ENCODE measurements at regions of chr16 and their contacts with region 1.

Region 1: GRCh38 chr16:56317998-56318826 is 107.1 kb downstream of the AMFR start:
- DNase-seq: peak; percentile 71
- H3K4me3 ChIP-seq: peak overlapping the region in 1 of 3 experiments; percentile 10
- H3K27ac ChIP-seq: no peak overlapping the region
- H3K4me1 ChIP-seq: no peaks in the 10 kb centered on the region
- H3K27me3 ChIP-seq: peaks cover 4 to 6% of the 10 kb centered on the region in 2 experiments
- CTCF ChIP-seq: peak; percentile 89 to 94
- POLR2A ChIP-seq: no peak

Region 2: GRCh38 chr16:55711959-55712876 is 606.0 kb before region 1 on chr16:
- CTCF ChIA-PET with region 1: interaction called, 14 read pairs
- POLR2A ChIA-PET with region 1: no interaction called
- dilution Hi-C with region 1: no loop called
- intact Hi-C with region 1: loop called (anchors 1 kb)
- DNase-seq: peak; percentile 47
- H3K4me3 ChIP-seq: no peak overlapping the region
- H3K27ac ChIP-seq: no peak overlapping the region
- H3K4me1 ChIP-seq: no peaks in the 10 kb centered on the region
- H3K27me3 ChIP-seq: peaks cover 1 to 2% of the 10 kb centered on the region in 2 experiments
- CTCF ChIP-seq: peak; percentile 61 to 69
- POLR2A ChIP-seq: no peak

Region 3: DNA sequence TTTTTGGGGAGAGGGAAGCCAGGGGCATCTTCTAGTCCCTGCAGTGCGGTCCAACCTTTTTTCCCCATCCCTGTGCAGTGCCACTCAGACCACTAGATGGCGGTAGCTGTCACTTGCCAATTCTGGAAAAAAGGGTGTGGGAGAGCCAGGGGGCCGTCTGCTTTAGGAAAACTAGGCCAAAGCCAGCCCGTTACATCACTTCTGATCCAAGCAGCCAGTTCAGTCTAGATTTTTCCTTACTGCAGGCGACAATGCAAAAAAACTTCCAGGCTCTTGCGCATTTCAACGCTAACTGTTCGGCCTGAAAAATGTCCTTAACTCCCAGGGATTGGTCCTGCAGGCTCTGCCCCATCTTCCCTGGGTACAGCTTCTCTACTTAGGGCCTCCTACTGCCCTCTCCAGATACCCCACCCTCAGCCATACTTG is 373.8 kb before region 1 on chr16:
- CTCF ChIA-PET with region 1: interaction called, 166 read pairs
- POLR2A ChIA-PET with region 1: no interaction called
- dilution Hi-C with region 1: no loop called
- intact Hi-C with region 1: no loop called
- DNase-seq: peak; percentile 41
- H3K4me3 ChIP-seq: no peak overlapping the region
- H3K27ac ChIP-seq: no peak overlapping the region
- H3K4me1 ChIP-seq: no peaks in the 10 kb centered on the region
- H3K27me3 ChIP-seq: no peaks in the 10 kb centered on the region
- CTCF ChIP-seq: peak; percentile 90 to 92
- POLR2A ChIP-seq: no peak

Region 4: DNA sequence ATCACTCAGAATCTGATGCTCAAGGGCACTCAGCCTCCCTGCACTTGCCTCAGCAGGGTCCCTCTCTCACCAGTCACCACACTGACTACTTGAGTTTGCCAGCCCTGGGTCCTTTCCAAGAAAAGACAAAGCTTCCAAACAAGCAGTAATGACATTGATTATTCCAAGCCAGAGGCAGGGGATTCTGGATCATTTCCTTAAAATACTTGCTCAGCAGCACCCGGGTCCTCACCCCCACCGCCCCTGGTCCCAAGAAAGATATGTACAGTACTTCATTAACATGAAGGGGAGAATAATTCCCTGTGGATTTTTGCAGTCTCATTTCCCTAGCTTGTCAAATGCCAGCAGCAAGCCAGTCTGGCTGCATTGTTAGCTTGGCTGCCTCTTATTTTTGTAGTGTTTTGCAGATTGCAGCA is 210.1 kb before region 1 on chr16:
- CTCF ChIA-PET with region 1: no interaction called
- POLR2A ChIA-PET with region 1: no interaction called
- dilution Hi-C with region 1: no loop called
- intact Hi-C with region 1: no loop called
- DNase-seq: no peak
- H3K4me3 ChIP-seq: no peak overlapping the region
- H3K27ac ChIP-seq: no peak overlapping the region
- H3K4me1 ChIP-seq: no peaks in the 10 kb centered on the region
- H3K27me3 ChIP-seq: no peaks in the 10 kb centered on the region
- CTCF ChIP-seq: no peak
- POLR2A ChIP-seq: no peak

Region 5: GRCh38 chr16:56300891-56301850 is 17.0 kb before region 1 on chr16:
- CTCF ChIA-PET with region 1: interaction called, 41 read pairs
- POLR2A ChIA-PET with region 1: no interaction called
- dilution Hi-C with region 1: no loop called
- intact Hi-C with region 1: no loop called
- DNase-seq: no peak
- H3K4me3 ChIP-seq: no peak overlapping the region
- H3K27ac ChIP-seq: no peak overlapping the region
- H3K4me1 ChIP-seq: no peaks in the 10 kb centered on the region
- H3K27me3 ChIP-seq: no peaks in the 10 kb centered on the region
- CTCF ChIP-seq: no peak
- POLR2A ChIP-seq: no peak

Region 6: GRCh38 chr16:56356276-56357240 is 38.3 kb after region 1 on chr16:
- CTCF ChIA-PET with region 1: interaction called, 21 read pairs
- POLR2A ChIA-PET with region 1: no interaction called
- dilution Hi-C with region 1: no loop called
- intact Hi-C with region 1: loop called (anchors 2 kb)
- DNase-seq: peak; percentile 88
- H3K4me3 ChIP-seq: peak overlapping the region; percentile 22 to 60 (median 56)
- H3K27ac ChIP-seq: peak overlapping the region; percentile 87
- H3K4me1 ChIP-seq: peaks cover 14% of the 10 kb centered on the region
- H3K27me3 ChIP-seq: peaks cover 0 to 3% of the 10 kb centered on the region in 2 experiments
- CTCF ChIP-seq: peak; percentile 92 to 93
- POLR2A ChIP-seq: no peak

Region 7: GRCh38 chr16:56732366-56732765 is 414.2 kb after region 1 on chr16:
- CTCF ChIA-PET with region 1: no interaction called
- POLR2A ChIA-PET with region 1: no interaction called
- dilution Hi-C with region 1: no loop called
- intact Hi-C with region 1: no loop called
- DNase-seq: no peak
- H3K4me3 ChIP-seq: no peak overlapping the region
- H3K27ac ChIP-seq: no peak overlapping the region
- H3K4me1 ChIP-seq: peaks cover 21% of the 10 kb centered on the region
- H3K27me3 ChIP-seq: no peaks in the 10 kb centered on the region
- CTCF ChIP-seq: no peak
- POLR2A ChIP-seq: no peak

Region 8: DNA sequence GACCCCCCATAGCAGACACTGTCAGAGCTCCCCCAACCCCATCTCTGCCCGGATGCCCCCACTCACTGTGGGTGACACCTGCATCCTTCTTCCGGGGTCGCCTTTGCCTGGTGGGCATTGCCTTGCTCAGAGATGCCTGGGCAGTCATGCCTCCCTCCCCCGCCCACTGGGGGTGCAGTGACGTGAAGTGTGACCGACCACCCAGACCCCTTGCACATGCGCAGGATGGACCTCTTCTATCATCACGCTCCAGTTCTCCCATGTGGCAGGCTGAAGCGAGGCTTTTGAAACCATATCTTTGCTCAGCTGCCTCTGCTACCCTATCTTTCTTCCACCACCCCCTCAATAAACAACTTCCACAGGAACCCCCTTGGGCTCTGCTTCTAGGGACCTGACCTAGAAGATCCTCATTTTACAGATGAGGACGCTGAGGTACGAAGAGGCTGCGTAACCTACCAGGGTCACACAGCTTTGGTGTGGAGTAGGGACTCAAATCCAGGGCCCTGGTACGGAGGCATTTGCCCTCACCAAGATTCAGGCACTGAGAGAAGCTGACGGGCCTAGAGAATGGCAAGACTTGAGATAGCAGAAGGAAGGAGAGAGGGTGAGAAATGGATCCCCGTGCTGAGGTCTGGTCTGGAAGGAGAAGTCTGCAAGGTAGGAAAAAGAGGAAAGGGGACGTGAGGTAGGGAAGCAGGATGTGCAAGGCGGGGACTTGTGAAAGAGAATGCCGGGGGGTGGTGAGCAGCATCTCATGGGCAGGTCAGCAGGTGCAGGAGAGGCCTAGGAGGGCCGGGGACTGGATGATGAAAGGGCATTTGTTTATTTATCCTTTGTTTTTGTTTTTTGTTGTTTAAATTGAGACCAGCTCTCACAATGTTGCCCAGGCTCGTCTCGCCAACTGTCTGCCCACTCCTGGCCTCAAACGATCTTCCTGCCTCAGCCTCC is 685.5 kb after region 1 on chr16:
- CTCF ChIA-PET with region 1: no interaction called
- POLR2A ChIA-PET with region 1: no interaction called
- dilution Hi-C with region 1: no loop called
- intact Hi-C with region 1: no loop called
- DNase-seq: no peak
- H3K4me3 ChIP-seq: no peak overlapping the region
- H3K27ac ChIP-seq: no peak overlapping the region
- H3K4me1 ChIP-seq: peaks cover 14% of the 10 kb centered on the region
- H3K27me3 ChIP-seq: no peaks in the 10 kb centered on the region
- CTCF ChIP-seq: no peak
- POLR2A ChIP-seq: no peak